ENCODE measurements at regions of chr6 and their contacts with region 1.

Region 1: DNA sequence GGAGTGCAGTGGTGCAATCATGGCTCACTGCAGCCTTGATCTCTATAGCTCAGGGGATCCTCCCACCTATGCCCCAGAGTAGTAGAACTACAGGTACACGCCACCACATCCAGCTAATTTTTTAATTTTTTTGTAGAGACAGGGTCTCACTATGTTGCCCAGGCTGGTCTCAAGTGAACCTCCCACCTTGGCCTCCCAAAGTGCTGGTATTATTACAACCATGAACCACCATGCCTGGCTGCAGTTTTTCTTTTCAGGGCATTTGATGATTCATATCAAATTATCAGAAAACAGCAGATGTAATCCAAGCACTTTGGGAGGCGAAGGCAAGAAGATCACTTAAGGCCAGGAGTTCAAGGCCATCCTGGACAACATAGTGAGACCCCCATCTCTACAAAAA is 88.4 kb upstream of the JARID2 start:
- DNase-seq: no peak
- H3K4me3 ChIP-seq: no peak overlapping the region
- H3K4me3 Mint-ChIP-seq: no peak overlapping the region
- H3K27ac ChIP-seq: no peak overlapping the region
- H3K27ac Mint-ChIP-seq: no peak overlapping the region
- H3K4me1 ChIP-seq: no peaks in the 10 kb centered on the region
- H3K4me1 Mint-ChIP-seq: no peaks in the 10 kb centered on the region
- H3K27me3 ChIP-seq: no peaks in the 10 kb centered on the region
- H3K27me3 Mint-ChIP-seq: peaks cover 0 to 3% of the 10 kb centered on the region in 2 donors

Region 2: DNA sequence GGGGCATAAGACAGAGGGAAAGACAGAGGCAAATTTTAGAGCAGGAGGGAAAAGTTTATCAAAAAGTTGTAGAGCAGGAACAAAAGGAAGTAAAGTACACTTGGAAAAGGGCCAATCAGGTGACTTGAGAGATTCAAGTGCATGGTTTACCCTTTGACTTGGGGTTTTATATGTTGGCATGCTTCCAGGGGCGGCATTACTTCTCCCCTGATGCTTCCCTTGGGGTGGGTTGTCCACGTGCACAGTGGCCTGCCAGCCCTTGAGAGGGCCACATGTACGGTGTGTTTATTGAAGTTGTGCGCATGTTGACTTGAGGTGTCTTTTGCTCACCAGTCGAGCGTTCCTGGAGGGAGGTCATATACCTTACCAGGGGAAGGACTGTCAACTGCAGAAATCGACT is 171.1 kb before region 1 on chr6:
- CTCF ChIA-PET with region 1: no interaction called
- POLR2A ChIA-PET with region 1: interaction called, 10 read pairs
- DNase-seq: no peak
- H3K4me3 ChIP-seq: no peak overlapping the region
- H3K4me3 Mint-ChIP-seq: no peak overlapping the region
- H3K27ac ChIP-seq: no peak overlapping the region
- H3K27ac Mint-ChIP-seq: no peak overlapping the region
- H3K4me1 ChIP-seq: no peaks in the 10 kb centered on the region
- H3K4me1 Mint-ChIP-seq: no peaks in the 10 kb centered on the region
- H3K27me3 ChIP-seq: no peaks in the 10 kb centered on the region
- H3K27me3 Mint-ChIP-seq: peaks cover 3 to 21% of the 10 kb centered on the region in 2 donors